CD4-positive, alpha-beta T cell (primary cell): ENCODE measurements at regions of chr9 and their contacts with region 1.

Region 1: GRCh38 chr9:127916665-127917613 is at the start of gene ST6GALNAC4:
- DNase-seq: peak; percentile 89 to 99 (median 96)
- ATAC-seq: peak; percentile 94
- H3K4me3 ChIP-seq: peak within 1 kb of the TSS; percentile 91
- H3K4me3 Mint-ChIP-seq: peak within 1 kb of the TSS; percentile 88
- H3K27ac ChIP-seq: peak within 1 kb of the TSS in 1 of 2 donors; percentile 56
- H3K27ac Mint-ChIP-seq: peak within 1 kb of the TSS; percentile 89
- H3K4me1 ChIP-seq: peaks cover 65% of the 10 kb centered on the region
- H3K4me1 Mint-ChIP-seq: peaks cover 51% of the 10 kb centered on the region
- H3K27me3 ChIP-seq: no peaks in the 10 kb centered on the region
- H3K27me3 Mint-ChIP-seq: no peaks in the 10 kb centered on the region
- CTCF ChIP-seq: no peak
- total RNA-seq, gene ST6GALNAC4: 28.7 to 30.2 TPM

Region 2: GRCh38 chr9:127159325-127159801 is 757.6 kb before region 1 on chr9:
- CTCF ChIA-PET with region 1: no interaction called
- POLR2A ChIA-PET with region 1: no interaction called
- intact Hi-C with region 1: no loop called
- DNase-seq: no peak
- ATAC-seq: no peak
- H3K4me3 ChIP-seq: no peak overlapping the region
- H3K4me3 Mint-ChIP-seq: no peak overlapping the region
- H3K27ac ChIP-seq: no peak overlapping the region
- H3K27ac Mint-ChIP-seq: no peak overlapping the region
- H3K4me1 ChIP-seq: peaks cover 9% of the 10 kb centered on the region
- H3K4me1 Mint-ChIP-seq: peaks cover 32% of the 10 kb centered on the region
- H3K27me3 ChIP-seq: no peaks in the 10 kb centered on the region
- H3K27me3 Mint-ChIP-seq: no peaks in the 10 kb centered on the region
- CTCF ChIP-seq: no peak

Region 3: DNA sequence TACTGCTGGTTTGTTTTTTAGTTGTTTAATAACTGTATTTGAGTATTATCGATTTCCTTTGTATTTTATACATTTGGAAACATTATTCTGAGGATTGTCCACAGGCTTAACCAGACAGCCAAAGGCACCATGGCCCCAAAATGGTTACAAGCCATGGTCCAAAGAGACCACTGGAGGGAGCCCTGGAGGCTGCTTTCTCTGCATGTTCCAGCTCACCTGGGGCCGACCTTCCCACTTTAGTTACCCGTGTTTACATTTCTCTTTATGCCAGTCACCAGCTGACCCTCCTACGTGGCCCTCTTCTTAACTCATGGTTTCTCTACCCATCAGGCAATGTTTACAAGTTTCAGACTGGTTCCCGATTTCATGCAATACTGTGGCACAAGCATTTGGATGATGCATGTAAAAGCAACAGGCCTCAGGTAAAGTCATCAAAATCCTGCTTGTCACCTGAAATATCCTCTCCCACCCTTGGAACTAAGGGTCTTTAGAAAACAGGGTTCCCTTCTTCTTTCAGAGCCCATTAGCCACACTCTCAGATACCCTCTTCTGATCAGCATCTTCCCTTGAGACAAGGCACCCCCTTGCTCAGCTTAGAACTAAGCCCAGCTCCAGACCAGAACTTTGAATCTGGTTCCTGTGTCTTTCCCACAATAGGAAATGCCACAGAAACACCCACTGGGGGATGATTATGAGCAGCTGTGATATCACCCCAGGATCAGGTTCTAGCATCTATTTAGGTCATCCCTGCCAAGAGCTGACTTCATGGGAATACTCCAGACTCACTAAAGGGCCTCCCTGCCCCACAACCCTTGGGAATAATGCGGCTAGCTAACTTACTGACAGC is 702.3 kb before region 1 on chr9:
- CTCF ChIA-PET with region 1: interaction called, 5 read pairs
- POLR2A ChIA-PET with region 1: interaction called, 3 read pairs
- intact Hi-C with region 1: loop called (anchors 1 to 2 kb)
- DNase-seq: peak; percentile 40 to 78 (median 54)
- ATAC-seq: peak; percentile 92
- H3K4me3 ChIP-seq: no peak overlapping the region
- H3K4me3 Mint-ChIP-seq: no peak overlapping the region
- H3K27ac ChIP-seq: no peak overlapping the region
- H3K27ac Mint-ChIP-seq: no peak overlapping the region
- H3K4me1 ChIP-seq: no peaks in the 10 kb centered on the region
- H3K4me1 Mint-ChIP-seq: peaks cover 5% of the 10 kb centered on the region
- H3K27me3 ChIP-seq: no peaks in the 10 kb centered on the region
- H3K27me3 Mint-ChIP-seq: peaks cover 16% of the 10 kb centered on the region
- CTCF ChIP-seq: peak; percentile 83

Region 4: DNA sequence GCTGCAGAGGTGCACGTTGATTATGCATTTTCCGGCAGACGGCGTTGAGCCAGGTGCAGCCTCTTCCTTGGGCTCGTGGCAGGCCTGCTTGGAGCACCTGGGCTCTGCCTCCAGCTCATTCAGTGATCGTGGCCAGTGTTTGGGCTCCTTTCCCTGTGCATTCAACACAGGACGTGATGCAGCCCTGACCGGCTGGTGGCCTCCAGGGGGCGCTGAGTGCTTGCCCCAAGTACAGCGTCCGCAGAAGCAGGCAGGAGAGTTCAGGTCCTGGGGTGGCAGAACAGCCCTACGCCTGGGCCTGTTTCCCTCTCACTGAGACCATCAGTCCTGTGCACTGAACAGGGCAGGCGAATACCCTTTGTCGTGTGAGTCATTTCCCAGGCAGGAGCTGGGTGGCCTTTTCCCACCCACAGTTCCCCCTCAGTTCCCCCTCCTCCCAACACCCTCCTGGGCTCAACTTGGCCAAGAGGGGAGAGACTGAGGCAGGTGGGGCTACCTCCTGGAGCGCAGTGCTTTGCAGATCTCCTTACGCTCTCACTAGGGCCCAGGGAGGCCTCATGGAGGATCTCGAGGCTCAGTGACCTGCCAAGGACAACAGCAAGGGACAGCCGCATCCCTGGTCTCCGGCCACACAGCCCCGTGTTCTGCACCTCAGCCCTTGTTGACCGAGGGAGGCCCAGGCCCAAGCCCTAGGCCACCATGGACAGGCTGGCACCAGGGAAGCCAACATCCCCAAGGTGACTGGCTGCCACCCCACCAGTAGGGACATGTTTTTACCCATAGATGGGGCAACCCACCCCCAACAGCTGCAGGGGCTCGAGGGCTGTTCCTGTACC is 412.8 kb before region 1 on chr9:
- CTCF ChIA-PET with region 1: no interaction called
- POLR2A ChIA-PET with region 1: no interaction called
- intact Hi-C with region 1: loop called (anchors 1 kb)
- DNase-seq: peak; percentile 70 to 89 (median 78)
- ATAC-seq: peak; percentile 93
- H3K4me3 ChIP-seq: no peak overlapping the region
- H3K4me3 Mint-ChIP-seq: no peak overlapping the region
- H3K27ac ChIP-seq: no peak overlapping the region
- H3K27ac Mint-ChIP-seq: no peak overlapping the region
- H3K4me1 ChIP-seq: peaks cover 3% of the 10 kb centered on the region
- H3K4me1 Mint-ChIP-seq: peaks cover 4% of the 10 kb centered on the region
- H3K27me3 ChIP-seq: no peaks in the 10 kb centered on the region
- H3K27me3 Mint-ChIP-seq: no peaks in the 10 kb centered on the region
- CTCF ChIP-seq: peak; percentile 88

Region 5: DNA sequence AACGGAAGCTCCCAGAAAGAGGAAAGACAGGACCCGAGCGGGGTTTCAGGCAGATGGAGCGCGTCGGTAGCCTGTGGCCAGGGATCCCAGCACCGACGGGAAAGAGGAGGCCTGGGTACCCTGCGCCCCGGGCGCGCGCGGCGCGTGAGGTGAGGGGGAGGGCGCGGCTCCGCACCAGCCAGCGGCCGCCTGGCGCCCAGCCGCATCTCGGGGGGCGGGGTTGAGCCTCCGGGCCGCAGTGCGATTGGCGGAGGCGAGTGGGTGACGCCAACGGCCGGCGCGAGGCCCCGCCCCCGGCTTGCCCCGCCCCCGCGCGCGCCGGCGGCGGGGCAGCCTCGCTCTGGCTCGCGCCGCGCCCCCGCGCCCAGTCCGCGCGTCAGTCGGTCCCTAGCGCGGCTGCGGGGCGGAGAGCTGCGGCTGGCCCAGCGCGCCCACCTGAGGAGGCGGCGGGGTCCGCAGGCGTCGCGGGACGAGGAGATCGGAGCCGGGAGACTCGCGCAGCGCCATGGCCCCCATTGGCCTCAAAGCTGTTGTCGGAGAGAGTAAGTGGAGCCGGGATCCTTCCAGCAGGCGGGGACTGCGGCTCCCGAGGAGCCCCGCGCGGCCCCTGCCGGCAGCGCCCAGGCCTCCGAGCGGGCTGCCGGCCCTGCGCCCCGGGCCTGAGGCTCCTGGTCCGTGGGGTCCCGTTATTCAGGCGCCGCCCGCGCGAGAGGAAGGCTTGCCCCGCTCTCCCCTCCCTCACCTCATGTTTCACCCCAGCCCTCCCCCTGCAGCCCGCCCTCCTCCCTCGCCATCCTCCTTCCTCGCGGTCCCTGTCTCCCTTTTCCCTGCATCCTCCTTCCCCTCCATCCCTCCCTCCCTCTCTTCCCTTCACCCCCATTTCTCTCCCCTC is 304.8 kb before region 1 on chr9 and contains the start of gene STXBP1:
- CTCF ChIA-PET with region 1: no interaction called
- POLR2A ChIA-PET with region 1: interaction called, 3 read pairs
- intact Hi-C with region 1: loop called in 1 of 2 experiments (anchors 5 kb)
- DNase-seq: peak; percentile 66 to 93 (median 84)
- ATAC-seq: peak; percentile 76
- H3K4me3 ChIP-seq: peak within 1 kb of the TSS; percentile 57
- H3K4me3 Mint-ChIP-seq: peak within 1 kb of the TSS; percentile 99
- H3K27ac ChIP-seq: no peak within 1 kb of the TSS
- H3K27ac Mint-ChIP-seq: peak within 1 kb of the TSS; percentile 45
- H3K4me1 ChIP-seq: peaks cover 35% of the 10 kb centered on the region
- H3K4me1 Mint-ChIP-seq: peaks cover 32% of the 10 kb centered on the region
- H3K27me3 ChIP-seq: peaks cover 0 to 8% of the 10 kb centered on the region in 2 experiments
- H3K27me3 Mint-ChIP-seq: peaks cover 47% of the 10 kb centered on the region
- CTCF ChIP-seq: no peak
- total RNA-seq, gene STXBP1: 1.9 to 3.4 TPM

Region 6: GRCh38 chr9:127707726-127708147 is 209.2 kb before region 1 on chr9:
- CTCF ChIA-PET with region 1: no interaction called
- POLR2A ChIA-PET with region 1: no interaction called
- intact Hi-C with region 1: no loop called
- DNase-seq: peak in 10 of 14 experiments; percentile 15 to 77 (median 32)
- ATAC-seq: peak; percentile 76
- H3K4me3 ChIP-seq: no peak overlapping the region
- H3K4me3 Mint-ChIP-seq: no peak overlapping the region
- H3K27ac ChIP-seq: no peak overlapping the region
- H3K27ac Mint-ChIP-seq: no peak overlapping the region
- H3K4me1 ChIP-seq: peaks cover 29% of the 10 kb centered on the region
- H3K4me1 Mint-ChIP-seq: peaks cover 19% of the 10 kb centered on the region
- H3K27me3 ChIP-seq: no peaks in the 10 kb centered on the region
- H3K27me3 Mint-ChIP-seq: no peaks in the 10 kb centered on the region
- CTCF ChIP-seq: no peak

Region 7: GRCh38 chr9:127785023-127785932 is 131.7 kb before region 1 on chr9:
- CTCF ChIA-PET with region 1: interaction called, 11 read pairs
- POLR2A ChIA-PET with region 1: interaction called, 16 read pairs
- intact Hi-C with region 1: loop called in 1 of 2 experiments (anchors 1 kb)
- DNase-seq: peak; percentile 80 to 95 (median 89)
- ATAC-seq: peak; percentile 51
- H3K4me3 ChIP-seq: peak overlapping the region; percentile 50
- H3K4me3 Mint-ChIP-seq: peak overlapping the region; percentile 81
- H3K27ac ChIP-seq: peak overlapping the region; percentile 85 to 89
- H3K27ac Mint-ChIP-seq: peak overlapping the region; percentile 97
- H3K4me1 ChIP-seq: peaks cover 84% of the 10 kb centered on the region
- H3K4me1 Mint-ChIP-seq: peaks cover 72% of the 10 kb centered on the region
- H3K27me3 ChIP-seq: no peaks in the 10 kb centered on the region
- H3K27me3 Mint-ChIP-seq: no peaks in the 10 kb centered on the region
- CTCF ChIP-seq: peak; percentile 76

Region 8: GRCh38 chr9:127884427-127884911 is 32.5 kb before region 1 on chr9:
- CTCF ChIA-PET with region 1: interaction called, 3 read pairs
- POLR2A ChIA-PET with region 1: interaction called, 6 read pairs
- intact Hi-C with region 1: loop called (anchors 5 kb)
- DNase-seq: no peak
- ATAC-seq: no peak
- H3K4me3 ChIP-seq: no peak overlapping the region
- H3K4me3 Mint-ChIP-seq: no peak overlapping the region
- H3K27ac ChIP-seq: no peak overlapping the region
- H3K27ac Mint-ChIP-seq: peak overlapping the region; percentile 44
- H3K4me1 ChIP-seq: peaks cover 6% of the 10 kb centered on the region
- H3K4me1 Mint-ChIP-seq: peaks cover 5% of the 10 kb centered on the region
- H3K27me3 ChIP-seq: no peaks in the 10 kb centered on the region
- H3K27me3 Mint-ChIP-seq: no peaks in the 10 kb centered on the region
- CTCF ChIP-seq: no peak

Region 9: DNA sequence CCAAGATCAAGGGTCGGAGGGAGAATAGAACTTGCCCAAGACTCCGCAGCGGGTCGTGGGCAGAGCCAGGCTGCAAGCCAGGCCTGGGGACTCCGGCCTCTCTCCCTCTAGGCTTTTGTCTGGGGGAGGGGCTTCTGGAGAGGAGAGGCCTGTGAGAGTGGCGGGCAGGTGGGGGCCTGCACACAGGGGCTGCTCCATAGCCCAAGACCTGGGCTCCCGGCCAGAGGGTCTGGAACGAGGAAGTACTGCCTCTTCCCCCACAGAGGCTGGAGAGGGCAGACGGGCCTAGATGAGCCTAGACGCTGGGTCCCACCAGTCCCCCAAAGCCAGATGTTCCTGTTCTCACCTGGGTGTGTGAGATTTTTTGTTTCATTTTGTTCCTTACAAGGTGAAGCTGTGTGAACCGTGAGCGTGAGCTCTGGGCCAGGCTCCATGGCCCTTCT is 12.4 kb before region 1 on chr9:
- CTCF ChIA-PET with region 1: interaction called, 5 read pairs
- POLR2A ChIA-PET with region 1: interaction called, 77 read pairs
- intact Hi-C with region 1: loop called (anchors 1 kb)
- DNase-seq: peak in 3 of 14 experiments; percentile 37 to 51 (median 40)
- ATAC-seq: no peak
- H3K4me3 ChIP-seq: peak overlapping the region; percentile 63
- H3K4me3 Mint-ChIP-seq: peak overlapping the region; percentile 89
- H3K27ac ChIP-seq: peak overlapping the region; percentile 95 to 98
- H3K27ac Mint-ChIP-seq: peak overlapping the region; percentile 98
- H3K4me1 ChIP-seq: peaks cover 66% of the 10 kb centered on the region
- H3K4me1 Mint-ChIP-seq: peaks cover 61% of the 10 kb centered on the region
- H3K27me3 ChIP-seq: no peaks in the 10 kb centered on the region
- H3K27me3 Mint-ChIP-seq: no peaks in the 10 kb centered on the region
- CTCF ChIP-seq: no peak

Region 10: GRCh38 chr9:128310461-128310860 is 393.5 kb after region 1 on chr9:
- CTCF ChIA-PET with region 1: no interaction called
- POLR2A ChIA-PET with region 1: no interaction called
- intact Hi-C with region 1: no loop called
- DNase-seq: no peak
- ATAC-seq: no peak
- H3K4me3 ChIP-seq: no peak overlapping the region
- H3K4me3 Mint-ChIP-seq: no peak overlapping the region
- H3K27ac ChIP-seq: no peak overlapping the region
- H3K27ac Mint-ChIP-seq: no peak overlapping the region
- H3K4me1 ChIP-seq: no peaks in the 10 kb centered on the region
- H3K4me1 Mint-ChIP-seq: no peaks in the 10 kb centered on the region
- H3K27me3 ChIP-seq: no peaks in the 10 kb centered on the region
- H3K27me3 Mint-ChIP-seq: no peaks in the 10 kb centered on the region
- CTCF ChIP-seq: no peak